T-cell (primary cell): ENCODE measurements at regions of chr12 and their contacts with region 1.

Region 1: GRCh38 chr12:123232807-123233543 is at the starts of genes MPHOSPH9 and MTRFR:
- DNase-seq: peak; percentile 95 to 100 (median 99)
- ATAC-seq: peak; percentile 89 to 93 (median 93)
- H3K4me3 ChIP-seq: peak within 1 kb of the TSS; percentile 84 to 99
- H3K4me3 Mint-ChIP-seq: peak within 1 kb of the TSS; percentile 99 to 100 (median 100)
- H3K27ac ChIP-seq: peak within 1 kb of the TSS; percentile 80
- H3K27ac Mint-ChIP-seq: peak within 1 kb of the TSS; percentile 97 to 99
- H3K4me1 ChIP-seq: peaks cover 58 to 66% of the 10 kb centered on the region in 2 experiments
- H3K4me1 Mint-ChIP-seq: peaks cover 76 to 84% (median 84%) of the 10 kb centered on the region in 3 donors
- H3K27me3 ChIP-seq: no peaks in the 10 kb centered on the region
- H3K27me3 Mint-ChIP-seq: no peaks in the 10 kb centered on the region
- total RNA-seq, gene MPHOSPH9: 48.5 to 105 (median 56.3) TPM
- total RNA-seq, gene MTRFR: 33.7 to 49.7 (median 42.4) TPM

Region 2: GRCh38 chr12:122981047-122981918 is 251.7 kb before region 1 on chr12:
- CTCF ChIA-PET with region 1: interaction called in 1 of 2 experiments, 3 read pairs
- POLR2A ChIA-PET with region 1: interaction called, 4 to 10 read pairs
- DNase-seq: peak in 6 of 35 experiments; percentile 19 to 40 (median 28)
- ATAC-seq: peak; percentile 13 to 46 (median 25)
- H3K4me3 ChIP-seq: peak overlapping the region; percentile 69 to 74
- H3K4me3 Mint-ChIP-seq: peak overlapping the region; percentile 84 to 88 (median 87)
- H3K27ac ChIP-seq: peak overlapping the region; percentile 63
- H3K27ac Mint-ChIP-seq: peak overlapping the region; percentile 83 to 91
- H3K4me1 ChIP-seq: peaks cover 19 to 75% of the 10 kb centered on the region in 2 experiments
- H3K4me1 Mint-ChIP-seq: peaks cover 47 to 68% (median 58%) of the 10 kb centered on the region in 3 donors
- H3K27me3 ChIP-seq: no peaks in the 10 kb centered on the region
- H3K27me3 Mint-ChIP-seq: no peaks in the 10 kb centered on the region

Region 3: GRCh38 chr12:123043536-123044001 is 189.4 kb before region 1 on chr12:
- CTCF ChIA-PET with region 1: interaction called in 1 of 2 experiments, 23 read pairs
- POLR2A ChIA-PET with region 1: interaction called in 1 of 2 experiments, 4 read pairs
- DNase-seq: peak; percentile 47 to 83 (median 67)
- ATAC-seq: peak; percentile 95 to 97 (median 96)
- H3K4me3 ChIP-seq: peak overlapping the region in 1 of 2 donors; percentile 30
- H3K4me3 Mint-ChIP-seq: peak overlapping the region in 2 of 3 donors; percentile 9 to 24
- H3K27ac ChIP-seq: peak overlapping the region; percentile 38
- H3K27ac Mint-ChIP-seq: peak overlapping the region; percentile 72 to 82
- H3K4me1 ChIP-seq: peaks cover 12 to 23% of the 10 kb centered on the region in 2 experiments
- H3K4me1 Mint-ChIP-seq: peaks cover 29 to 61% (median 38%) of the 10 kb centered on the region in 3 donors
- H3K27me3 ChIP-seq: no peaks in the 10 kb centered on the region
- H3K27me3 Mint-ChIP-seq: no peaks in the 10 kb centered on the region

Region 4: DNA sequence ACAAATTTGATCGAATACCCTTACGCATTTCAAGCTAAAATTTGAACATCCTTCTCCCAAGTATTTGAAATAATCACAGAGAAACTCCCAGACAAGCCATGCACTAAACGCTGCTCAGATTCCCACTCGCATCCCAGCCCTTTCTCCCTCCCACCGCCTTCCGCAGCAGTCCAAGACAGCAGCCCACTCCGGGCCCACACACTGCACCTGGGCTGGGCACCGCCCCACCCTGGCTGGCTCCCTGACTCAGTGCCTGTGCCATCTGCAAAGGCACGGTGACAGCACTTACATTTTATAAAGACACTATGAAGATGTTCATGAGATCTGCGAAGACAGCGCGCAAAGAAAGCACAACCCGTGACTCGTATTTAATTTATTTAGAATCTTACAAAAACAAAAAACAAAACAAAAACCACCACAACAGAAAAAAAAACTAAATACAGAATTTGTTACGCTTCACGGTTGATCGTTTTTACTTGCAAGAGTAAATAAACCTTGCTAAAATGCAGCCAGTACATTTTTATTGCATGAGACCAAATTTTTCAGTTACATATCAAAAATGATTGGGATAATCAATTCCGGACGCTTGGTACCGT is 55.9 kb after region 1 on chr12:
- CTCF ChIA-PET with region 1: no interaction called
- POLR2A ChIA-PET with region 1: no interaction called
- DNase-seq: no peak
- ATAC-seq: no peak
- H3K4me3 ChIP-seq: no peak overlapping the region
- H3K4me3 Mint-ChIP-seq: no peak overlapping the region
- H3K27ac ChIP-seq: no peak overlapping the region
- H3K27ac Mint-ChIP-seq: no peak overlapping the region
- H3K4me1 ChIP-seq: no peaks in the 10 kb centered on the region
- H3K4me1 Mint-ChIP-seq: no peaks in the 10 kb centered on the region
- H3K27me3 ChIP-seq: peaks cover 0 to 2% of the 10 kb centered on the region in 2 experiments
- H3K27me3 Mint-ChIP-seq: no peaks in the 10 kb centered on the region